Adrenal gland (tissue), 19 donors: ENCODE measurements at regions of chr1 and their contacts with region 1.

Region 1: DNA sequence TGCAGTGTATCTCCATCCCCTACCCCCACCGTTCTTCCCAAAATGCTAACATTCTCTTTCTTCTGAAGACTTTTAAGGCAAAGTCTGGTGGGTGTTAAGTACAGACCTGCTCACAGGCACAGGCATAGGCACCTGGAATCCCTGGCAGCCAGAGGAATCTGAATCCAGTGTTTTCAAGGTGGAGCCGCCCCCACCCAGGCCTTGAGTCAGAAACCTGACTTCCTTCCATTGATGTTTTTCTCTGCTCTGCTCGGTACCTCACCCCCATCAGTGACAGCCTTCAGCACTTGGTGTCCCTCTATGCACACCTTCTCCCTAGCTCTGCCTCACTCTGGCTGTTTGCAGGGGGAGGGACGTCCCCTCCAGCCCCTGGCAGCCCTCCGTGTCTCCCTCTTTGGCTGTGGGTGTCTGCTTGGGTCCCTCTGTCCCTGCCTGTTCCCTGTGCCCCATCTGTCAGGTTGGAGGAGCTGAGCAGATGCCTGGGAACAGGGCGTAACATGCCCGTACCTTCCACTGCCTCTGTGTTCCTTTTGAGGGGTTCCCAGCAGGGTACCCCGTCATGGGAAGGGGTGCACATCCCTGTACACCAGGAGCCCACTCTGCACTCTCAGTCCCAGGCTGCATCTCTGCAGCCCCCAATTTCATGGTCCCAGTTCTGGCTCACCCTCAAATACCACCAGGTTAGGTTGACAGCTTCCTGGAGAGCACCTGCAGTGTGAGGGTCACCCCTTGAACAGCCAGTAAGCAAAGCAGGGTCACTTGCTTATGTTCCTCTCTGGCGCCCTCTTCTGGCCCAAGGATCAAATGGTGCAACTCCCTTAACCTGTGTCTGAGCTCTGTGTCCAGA is 6.7 kb downstream of the NCDN start:
- DNase-seq: peak; percentile 79 to 94 (median 84)
- H3K4me3 ChIP-seq: no peak overlapping the region
- H3K27ac ChIP-seq: no peak overlapping the region
- H3K4me1 ChIP-seq: peaks cover 0 to 14% of the 10 kb centered on the region in 2 donors
- H3K27me3 ChIP-seq: no peaks in the 10 kb centered on the region
- CTCF ChIP-seq: peak; percentile 50 to 75 (median 71)
- POLR2A ChIP-seq: no peak

Region 2: GRCh38 chr1:35202048-35202719 is 362.1 kb before region 1 on chr1:
- intact Hi-C with region 1: loop called (anchors 10 kb)
- DNase-seq: peak; percentile 67 to 90 (median 72)
- H3K4me3 ChIP-seq: no peak overlapping the region
- H3K27ac ChIP-seq: no peak overlapping the region
- H3K4me1 ChIP-seq: peaks cover 0 to 6% of the 10 kb centered on the region in 2 donors
- H3K27me3 ChIP-seq: no peaks in the 10 kb centered on the region
- CTCF ChIP-seq: peak; percentile 76 to 90 (median 86)
- POLR2A ChIP-seq: no peak

Region 3: GRCh38 chr1:35451125-35451528 is 113.1 kb before region 1 on chr1:
- intact Hi-C with region 1: loop called (anchors 5 kb)
- DNase-seq: peak; percentile 84 to 97 (median 93)
- H3K4me3 ChIP-seq: no peak overlapping the region
- H3K27ac ChIP-seq: peak overlapping the region in 4 of 5 donors; percentile 33 to 95 (median 77)
- H3K4me1 ChIP-seq: peaks cover 43 to 69% of the 10 kb centered on the region in 2 donors
- H3K27me3 ChIP-seq: no peaks in the 10 kb centered on the region
- CTCF ChIP-seq: peak; percentile 70 to 92 (median 89)
- POLR2A ChIP-seq: no peak

Region 4: GRCh38 chr1:35715568-35716002 is 151.3 kb after region 1 on chr1:
- intact Hi-C with region 1: loop called in 1 of 2 experiments (anchors 5 kb)
- DNase-seq: peak; percentile 58 to 86 (median 68)
- H3K4me3 ChIP-seq: no peak overlapping the region
- H3K27ac ChIP-seq: no peak overlapping the region
- H3K4me1 ChIP-seq: peaks cover 5 to 27% of the 10 kb centered on the region in 2 donors
- H3K27me3 ChIP-seq: no peaks in the 10 kb centered on the region
- CTCF ChIP-seq: peak; percentile 53 to 79 (median 64)
- POLR2A ChIP-seq: no peak

Region 5: DNA sequence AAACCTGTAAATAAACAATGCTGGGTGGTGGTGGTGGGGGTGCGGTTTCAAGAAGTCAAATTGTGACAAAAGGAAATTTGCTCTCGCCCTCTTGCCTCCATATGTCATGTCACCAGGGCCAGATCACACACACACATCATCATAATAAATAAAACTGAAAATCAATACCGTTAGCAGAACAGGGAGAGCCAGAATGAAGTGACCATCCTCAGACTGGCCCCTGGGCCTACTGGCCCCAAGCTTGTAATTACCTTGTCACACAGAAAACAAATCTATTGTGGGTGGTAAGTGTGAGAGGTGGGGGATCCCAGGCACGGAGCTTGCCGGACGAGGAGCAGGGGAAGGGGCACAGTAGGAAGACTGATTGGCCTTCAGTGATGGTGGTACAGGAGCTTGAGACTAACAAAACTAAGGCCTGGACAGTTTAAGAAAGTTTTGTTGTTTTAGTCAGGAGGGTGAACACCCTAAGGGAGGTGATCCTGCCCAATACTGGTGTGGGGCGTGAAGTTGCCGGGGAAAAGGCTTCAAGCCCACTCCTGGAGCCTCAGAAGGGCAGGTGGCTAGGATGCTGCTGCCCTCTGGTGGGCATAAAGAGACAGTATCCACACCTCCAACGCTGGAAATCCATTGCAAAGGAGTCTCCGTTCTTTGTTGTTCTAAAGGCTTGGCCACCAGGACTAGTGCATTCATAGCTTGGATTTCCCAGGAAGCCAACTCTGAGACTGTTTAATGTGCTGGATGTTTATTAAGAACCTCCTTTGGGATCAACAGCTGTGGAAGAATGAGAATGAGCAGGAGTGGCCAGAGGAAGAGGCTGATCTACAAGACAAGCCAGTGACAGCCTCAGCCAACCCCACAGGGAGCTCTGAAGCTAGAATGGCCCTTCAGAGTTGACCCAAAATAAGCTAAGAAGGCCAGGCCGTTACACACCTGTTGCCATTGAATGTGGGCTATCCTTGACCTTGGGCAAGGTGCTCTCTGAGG is 162.5 kb after region 1 on chr1:
- intact Hi-C with region 1: loop called in 1 of 2 experiments (anchors 5 kb)
- DNase-seq: peak; percentile 27 to 78 (median 53)
- H3K4me3 ChIP-seq: no peak overlapping the region
- H3K27ac ChIP-seq: no peak overlapping the region
- H3K4me1 ChIP-seq: no peaks in the 10 kb centered on the region
- H3K27me3 ChIP-seq: no peaks in the 10 kb centered on the region
- CTCF ChIP-seq: peak; percentile 68 to 86 (median 78)
- POLR2A ChIP-seq: no peak

Region 6: DNA sequence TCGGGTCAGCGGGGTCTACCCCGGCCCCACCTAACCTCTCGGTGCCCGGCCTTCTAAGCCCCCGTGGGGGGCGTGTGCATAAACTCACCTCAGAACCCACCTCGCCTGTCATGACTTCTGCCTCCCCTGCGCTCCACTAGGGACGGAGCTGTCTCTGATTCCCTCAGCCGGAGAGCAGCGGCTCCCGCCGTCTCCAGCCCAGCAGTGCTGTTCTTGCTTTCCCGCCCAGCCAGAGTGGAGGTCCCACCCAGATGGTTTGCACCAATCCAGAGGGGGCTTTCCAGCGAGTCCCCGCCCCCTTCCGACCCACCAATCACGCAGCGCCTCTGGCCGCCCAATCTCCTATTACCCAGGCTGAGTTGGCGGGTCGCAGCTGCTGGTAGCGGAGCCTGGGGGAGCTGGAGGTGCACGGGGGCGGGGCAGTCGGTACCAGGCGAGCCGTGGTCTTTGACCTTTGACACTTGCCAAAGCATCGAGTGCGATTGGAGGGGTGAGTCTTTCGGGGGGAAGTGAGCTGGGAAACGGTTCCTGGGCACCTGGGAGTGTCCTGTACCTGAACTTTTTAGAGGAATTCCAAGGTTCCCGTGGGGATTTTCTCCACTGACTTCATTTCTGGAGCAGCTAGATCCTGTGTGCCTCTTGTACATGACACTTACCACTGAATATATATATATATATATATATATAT is 205.6 kb after region 1 on chr1 and contains the start of gene CLSPN:
- intact Hi-C with region 1: loop called in 1 of 2 experiments (anchors 5 kb)
- DNase-seq: peak; percentile 94 to 97 (median 96)
- H3K4me3 ChIP-seq: peak within 1 kb of the TSS; percentile 10 to 87 (median 71)
- H3K27ac ChIP-seq: peak within 1 kb of the TSS in 4 of 5 donors; percentile 67 to 83 (median 79)
- H3K4me1 ChIP-seq: peaks cover 0 to 6% of the 10 kb centered on the region in 2 donors
- H3K27me3 ChIP-seq: no peaks in the 10 kb centered on the region
- CTCF ChIP-seq: no peak
- POLR2A ChIP-seq: peak in 1 of 2 donors; percentile 65
- total RNA-seq, gene CLSPN: 0.12 to 5.8 (median 0.72) TPM in 8 of 9 donors, not detected in the other